ENCODE measurements at regions of chr18 and their contacts with region 1.

Region 1: GRCh38 chr18:58529714-58530354 is 99.1 kb downstream of the ALPK2 start:
- DNase-seq: peak; percentile 55 to 61
- ATAC-seq: peak in 1 of 2 experiments; percentile 39; a peak in 2 of 6 replicates
- H3K4me3 ChIP-seq: no peak overlapping the region
- H3K27ac ChIP-seq: peak overlapping the region; percentile 94 to 100
- H3K4me1 ChIP-seq: peaks cover 49% of the 10 kb centered on the region
- CTCF ChIP-seq: peak; percentile 85
- EP300 ChIP-seq: no peak
- POLR2A ChIP-seq: no peak
- RAD21 ChIP-seq: peak; percentile 90 to 93

Region 2: DNA sequence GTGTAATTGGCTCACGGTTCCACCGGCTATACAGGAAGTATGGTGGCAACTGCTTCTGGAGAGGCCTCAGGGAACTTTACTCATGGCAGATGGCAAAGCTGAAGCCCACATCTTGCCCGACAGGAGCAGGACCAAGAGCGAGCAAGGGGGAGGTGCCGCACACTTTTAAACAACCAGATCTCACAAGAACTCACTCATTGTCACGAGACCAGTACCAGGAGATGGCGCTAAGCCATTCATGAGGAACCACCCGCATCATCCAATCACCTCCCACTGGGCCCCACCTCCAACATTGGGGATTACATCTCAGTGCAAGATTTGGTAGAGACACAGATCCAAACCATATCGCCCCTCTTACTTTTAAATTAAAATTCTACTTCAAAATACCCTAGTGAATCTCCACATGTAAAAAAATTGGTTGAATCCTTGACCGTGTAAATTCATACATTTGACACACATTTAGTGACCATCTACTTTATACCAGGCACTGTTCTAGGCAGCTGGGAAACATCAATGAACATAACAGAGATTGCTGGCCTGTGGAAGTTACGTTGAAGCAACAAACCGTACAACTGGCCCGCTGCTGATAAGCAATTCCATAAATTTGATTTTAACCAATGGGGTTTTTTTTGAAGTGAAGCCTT is 11.4 kb after region 1 on chr18:
- CTCF ChIA-PET with region 1: interaction called, 26 read pairs
- POLR2A ChIA-PET with region 1: no interaction called
- DNase-seq: peak in 1 of 2 experiments; percentile 67
- ATAC-seq: peak in 1 of 2 experiments; percentile 51; a peak in 3 of 6 replicates
- H3K4me3 ChIP-seq: no peak overlapping the region
- H3K27ac ChIP-seq: peak overlapping the region; percentile 54 to 76; a peak in 5 of 6 replicates
- H3K4me1 ChIP-seq: peaks cover 71% of the 10 kb centered on the region
- CTCF ChIP-seq: peak; percentile 31; the same call in 2 of the 3 replicates
- EP300 ChIP-seq: no peak
- POLR2A ChIP-seq: no peak
- RAD21 ChIP-seq: peak; percentile 24 to 36; a peak in 1 of 5 replicates

Region 3: DNA sequence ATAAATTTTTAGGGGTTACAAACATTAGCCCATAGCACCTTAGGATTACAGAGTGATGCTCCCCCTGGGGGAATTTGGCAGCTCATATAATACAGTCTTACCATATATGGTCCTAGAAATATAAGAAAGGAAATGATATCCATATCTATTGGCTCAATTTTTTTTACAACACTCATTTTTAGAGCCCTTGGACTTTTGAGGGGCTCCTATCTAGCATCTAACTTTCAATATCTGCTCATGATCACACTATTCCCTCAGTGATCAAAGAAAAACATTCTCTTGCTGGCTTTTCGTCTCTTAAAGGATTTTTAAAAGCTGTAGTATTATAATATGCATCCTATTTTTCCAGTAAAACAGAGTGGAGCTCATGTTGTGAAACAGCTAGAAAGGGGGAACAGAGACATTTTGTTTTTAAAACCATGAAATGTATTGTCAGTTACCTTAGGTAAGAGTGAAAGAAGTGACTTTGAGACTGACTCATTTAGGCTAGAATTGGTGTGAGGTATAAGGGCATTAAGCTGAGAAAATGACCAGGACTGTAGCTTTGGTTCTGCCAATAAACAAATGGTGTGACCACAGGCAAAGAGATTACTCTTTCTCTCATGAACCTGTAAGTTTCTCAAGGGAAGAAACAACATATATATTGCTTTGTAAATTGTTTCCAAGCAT is 33.3 kb after region 1 on chr18:
- CTCF ChIA-PET with region 1: interaction called, 11 read pairs
- POLR2A ChIA-PET with region 1: no interaction called
- DNase-seq: no peak
- ATAC-seq: no peak
- H3K4me3 ChIP-seq: no peak overlapping the region
- H3K27ac ChIP-seq: peak overlapping the region in 1 of 2 experiments; percentile 39; a peak in 2 of 6 replicates
- H3K4me1 ChIP-seq: peaks cover 34% of the 10 kb centered on the region
- CTCF ChIP-seq: no peak
- EP300 ChIP-seq: no peak
- POLR2A ChIP-seq: no peak
- RAD21 ChIP-seq: no peak

Region 4: GRCh38 chr18:58733866-58734265 is 204.0 kb after region 1 on chr18:
- CTCF ChIA-PET with region 1: no interaction called
- POLR2A ChIA-PET with region 1: no interaction called
- DNase-seq: no peak
- ATAC-seq: no peak
- H3K4me3 ChIP-seq: no peak overlapping the region
- H3K27ac ChIP-seq: no peak overlapping the region
- H3K4me1 ChIP-seq: no peaks in the 10 kb centered on the region
- CTCF ChIP-seq: no peak
- EP300 ChIP-seq: no peak
- POLR2A ChIP-seq: no peak
- RAD21 ChIP-seq: no peak

Region 5: DNA sequence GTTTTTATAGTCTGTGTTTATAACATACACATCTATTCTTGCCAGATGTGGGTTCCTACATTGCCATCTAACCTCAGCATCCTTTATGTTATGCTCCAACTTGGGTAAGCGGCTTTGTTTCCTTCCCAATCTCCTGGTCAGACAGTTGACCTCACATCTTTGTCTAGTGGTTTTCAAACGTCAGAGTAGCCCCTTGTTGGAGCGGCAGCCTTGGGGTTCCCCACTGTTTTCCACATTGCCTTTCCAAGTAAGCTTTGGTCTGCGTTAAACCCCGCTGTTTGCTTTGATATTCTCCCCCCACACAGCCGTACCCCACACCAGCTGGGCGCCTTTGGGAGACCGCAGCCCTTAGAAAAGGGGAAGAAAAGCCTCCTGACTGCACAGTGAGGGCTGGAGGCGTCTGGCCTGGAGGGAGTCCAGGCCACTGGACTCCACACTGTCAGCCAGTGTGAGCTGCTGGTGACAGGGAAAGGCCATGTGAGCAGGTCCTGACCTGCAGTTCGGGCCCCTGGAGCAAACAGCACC is 224.8 kb after region 1 on chr18:
- CTCF ChIA-PET with region 1: interaction called, 19 read pairs
- POLR2A ChIA-PET with region 1: interaction called, 3 read pairs
- DNase-seq: no peak
- ATAC-seq: peak in 1 of 2 experiments; percentile 22; a peak in 2 of 6 replicates
- H3K4me3 ChIP-seq: no peak overlapping the region
- H3K27ac ChIP-seq: no peak overlapping the region
- H3K4me1 ChIP-seq: no peaks in the 10 kb centered on the region
- CTCF ChIP-seq: no peak
- EP300 ChIP-seq: no peak
- POLR2A ChIP-seq: no peak
- RAD21 ChIP-seq: no peak

Region 6: GRCh38 chr18:58761241-58761969 is 231.6 kb after region 1 on chr18:
- CTCF ChIA-PET with region 1: interaction called, 120 read pairs
- POLR2A ChIA-PET with region 1: interaction called, 3 read pairs
- DNase-seq: no peak
- ATAC-seq: no peak
- H3K4me3 ChIP-seq: no peak overlapping the region
- H3K27ac ChIP-seq: 0 out of 6 replicates have a peak overlapping the region, but pooled peaks of 1 of the 2 experiments have one; percentile 6
- H3K4me1 ChIP-seq: 0 out of 3 replicates have a peak, but pooled peaks cover 5% of the 10 kb centered on the region
- CTCF ChIP-seq: no peak
- EP300 ChIP-seq: no peak
- POLR2A ChIP-seq: no peak
- RAD21 ChIP-seq: no peak

Measured in A549 (cell line).